Colonic mucosa (tissue), 4 donors: ENCODE measurements at regions of chr17 and their contacts with region 1.

Region 1: DNA sequence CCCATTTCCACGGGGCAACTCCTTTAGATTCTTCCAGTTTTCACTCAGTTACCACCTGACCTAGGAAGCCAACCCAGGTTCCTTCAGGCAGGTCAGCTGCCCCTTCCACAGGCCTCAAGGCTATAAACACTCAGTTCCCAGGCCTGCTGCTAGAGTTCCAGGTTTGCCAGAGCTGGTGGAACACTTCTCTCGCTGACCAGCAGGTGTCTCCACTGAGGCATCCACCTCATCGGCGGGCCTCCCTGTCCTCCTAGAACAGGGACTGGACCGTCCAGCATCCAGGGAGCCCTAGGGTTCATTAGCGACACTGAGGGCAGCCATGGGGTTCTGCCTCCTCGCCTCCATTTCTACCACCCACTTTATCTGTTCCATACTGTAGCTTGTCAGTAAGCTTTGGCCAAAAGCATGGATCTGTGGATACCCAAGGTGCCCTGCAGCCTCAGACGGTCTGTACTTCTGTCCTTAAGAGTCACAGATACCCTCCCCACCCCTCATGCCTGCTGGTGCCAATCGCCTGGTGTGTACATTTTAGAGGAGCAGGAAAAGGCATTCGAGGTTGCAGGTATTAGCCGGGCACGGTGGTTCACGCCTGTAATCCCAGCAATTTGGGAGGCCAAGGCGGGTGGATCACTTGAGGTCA is 29.0 kb downstream of the PIMREG start:
- DNase-seq: peak; percentile 82
- H3K4me3 ChIP-seq: no peak overlapping the region
- H3K27ac ChIP-seq: no peak overlapping the region
- H3K4me1 ChIP-seq: no peaks in the 10 kb centered on the region
- H3K27me3 ChIP-seq: no peaks in the 10 kb centered on the region
- CTCF ChIP-seq: peak; percentile 94

Region 2: GRCh38 chr17:6567529-6568183 is 94.4 kb after region 1 on chr17:
- intact Hi-C with region 1: loop called (anchors 10 kb)
- DNase-seq: no peak
- H3K4me3 ChIP-seq: no peak overlapping the region
- H3K27ac ChIP-seq: no peak overlapping the region
- H3K4me1 ChIP-seq: no peaks in the 10 kb centered on the region
- H3K27me3 ChIP-seq: no peaks in the 10 kb centered on the region
- CTCF ChIP-seq: no peak

Region 3: GRCh38 chr17:6648181-6648580 is 174.9 kb after region 1 on chr17:
- intact Hi-C with region 1: loop called (anchors 5 kb)
- DNase-seq: no peak
- H3K4me3 ChIP-seq: no peak overlapping the region
- H3K27ac ChIP-seq: no peak overlapping the region
- H3K4me1 ChIP-seq: peaks cover 9% of the 10 kb centered on the region
- H3K27me3 ChIP-seq: no peaks in the 10 kb centered on the region
- CTCF ChIP-seq: peak; percentile 15